A549 (cell line): ENCODE measurements at regions of chr9 and their contacts with region 1.

Region 1: DNA sequence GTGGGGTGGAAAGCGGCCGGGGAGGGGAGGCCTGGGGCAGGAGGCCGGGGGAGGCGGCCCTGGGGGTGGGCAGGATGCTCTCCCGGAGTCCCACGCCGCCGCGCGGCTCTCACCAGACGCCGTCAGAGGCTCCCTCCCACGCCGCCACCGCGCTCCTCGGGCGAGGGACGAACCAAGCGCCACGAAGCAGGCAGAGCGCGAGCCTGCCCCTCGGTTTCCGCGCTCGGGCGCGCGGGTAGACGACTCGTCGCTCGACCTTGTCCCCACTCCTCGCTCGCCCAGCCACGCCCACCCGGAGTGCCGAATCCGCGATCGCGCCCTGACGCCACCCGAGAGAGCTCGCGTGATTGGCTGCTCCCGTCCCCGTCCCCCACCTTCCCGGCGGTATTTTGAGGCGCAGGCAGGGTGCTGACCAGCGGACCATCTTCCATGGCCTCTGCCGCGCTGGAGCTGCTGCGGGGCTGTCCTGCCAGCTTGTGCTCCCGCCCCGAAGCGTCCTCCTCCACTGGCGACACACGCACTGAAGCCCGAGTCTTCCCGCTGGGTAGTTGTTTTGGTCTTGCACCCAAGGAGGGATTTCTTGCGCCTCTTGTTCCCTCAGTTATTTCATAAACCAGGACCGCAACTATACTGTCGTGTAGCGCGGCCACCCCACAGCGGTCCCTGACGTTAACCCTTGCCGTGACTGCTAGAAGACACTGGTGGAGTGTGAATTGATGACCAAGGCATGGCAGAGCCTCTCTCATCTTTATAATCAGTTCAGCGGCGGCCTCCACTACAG is at the start of gene GNE:
- DNase-seq: peak; percentile 83 to 96
- ATAC-seq: peak; percentile 92 to 93
- H3K4me3 ChIP-seq: peak within 1 kb of the TSS; percentile 89
- H3K27ac ChIP-seq: peak within 1 kb of the TSS; percentile 97
- H3K4me1 ChIP-seq: peaks cover 6% of the 10 kb centered on the region
- CTCF ChIP-seq: no peak
- EP300 ChIP-seq: no peak
- POLR2A ChIP-seq: peak; percentile 92
- RAD21 ChIP-seq: peak in 1 of 2 experiments; percentile 12; a peak in 1 of 5 replicates
- polyA plus RNA-seq, gene GNE: 32.9 and 39.5 TPM in 2 replicates

Region 2: DNA sequence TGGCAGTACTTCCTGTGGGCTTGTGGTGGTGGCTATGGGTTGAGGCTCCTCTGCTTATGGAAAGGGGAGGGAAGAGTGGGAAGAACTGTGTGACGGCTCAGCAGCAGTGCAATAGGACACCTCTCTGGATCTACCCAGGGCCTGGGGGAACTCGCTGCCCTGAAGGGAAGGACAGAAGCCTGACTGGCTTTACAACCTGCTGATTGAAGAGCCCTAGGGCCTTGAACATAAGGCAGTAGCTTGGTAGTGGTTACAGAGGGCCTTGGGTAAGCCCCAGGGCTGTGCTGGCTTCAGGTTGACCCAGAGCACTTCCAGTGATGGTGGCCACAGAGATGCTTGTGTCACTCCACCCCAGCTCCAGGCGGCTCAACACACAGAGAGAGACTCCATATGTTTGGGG is 83.7 kb before region 1 on chr9:
- CTCF ChIA-PET with region 1: no interaction called
- POLR2A ChIA-PET with region 1: no interaction called
- DNase-seq: no peak
- ATAC-seq: no peak; a peak in 1 of 6 replicates
- H3K4me3 ChIP-seq: no peak overlapping the region
- H3K27ac ChIP-seq: no peak overlapping the region
- H3K4me1 ChIP-seq: no peaks in the 10 kb centered on the region
- CTCF ChIP-seq: no peak
- EP300 ChIP-seq: no peak
- POLR2A ChIP-seq: no peak
- RAD21 ChIP-seq: no peak

Region 3: GRCh38 chr9:36306471-36307306 is 48.3 kb after region 1 on chr9:
- CTCF ChIA-PET with region 1: interaction called, 8 read pairs
- POLR2A ChIA-PET with region 1: interaction called, 10 read pairs
- DNase-seq: peak; percentile 55 to 76
- ATAC-seq: peak; percentile 84 to 85
- H3K4me3 ChIP-seq: no peak overlapping the region
- H3K27ac ChIP-seq: peak overlapping the region; percentile 67 to 84
- H3K4me1 ChIP-seq: peaks cover 27% of the 10 kb centered on the region
- CTCF ChIP-seq: no peak
- EP300 ChIP-seq: peak in 1 of 2 experiments; percentile 34; a peak in 3 of 5 replicates
- POLR2A ChIP-seq: no peak
- RAD21 ChIP-seq: no peak

Region 4: DNA sequence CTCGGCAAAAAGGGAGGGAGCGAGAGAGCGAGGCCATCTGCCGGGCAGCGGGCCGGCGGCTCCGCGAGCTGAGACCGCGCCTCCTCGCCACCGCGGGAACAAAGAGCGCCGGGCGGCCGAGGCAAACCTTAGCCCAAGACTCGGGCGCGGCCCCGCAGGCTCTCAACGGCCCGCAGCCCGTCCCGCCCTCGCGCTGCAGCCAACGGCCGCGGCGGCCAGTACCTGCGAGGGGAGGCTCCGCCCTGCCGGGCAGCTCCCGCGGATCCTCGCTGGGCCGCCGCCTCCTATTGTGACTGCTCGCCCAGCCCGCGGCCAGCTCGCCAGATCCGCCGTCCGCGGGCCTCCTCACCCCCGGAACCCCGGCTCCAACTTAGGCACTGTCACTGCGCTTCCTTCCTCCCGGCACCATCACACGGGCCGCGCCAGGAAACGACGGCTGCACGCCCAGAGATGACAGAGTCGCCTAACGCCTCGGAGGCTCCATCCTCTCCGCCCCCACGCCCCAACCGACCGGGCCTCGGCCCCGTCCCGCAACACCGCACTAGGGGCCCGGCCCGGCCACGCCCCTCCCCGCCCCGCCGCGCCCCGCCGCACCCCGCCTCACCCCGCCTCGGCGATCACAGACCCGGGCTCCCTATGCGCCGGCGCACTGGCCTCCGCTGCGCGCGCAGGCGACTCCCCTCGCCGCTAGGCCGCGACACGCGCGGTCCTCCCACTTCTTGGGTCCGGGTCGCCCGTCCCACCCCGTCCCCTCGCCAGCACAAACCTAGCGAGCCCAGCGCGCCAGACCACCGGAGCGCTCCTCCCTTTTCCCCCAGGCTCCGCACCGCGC is 142.2 kb after region 1 on chr9:
- CTCF ChIA-PET with region 1: no interaction called
- POLR2A ChIA-PET with region 1: interaction called, 16 read pairs
- DNase-seq: peak; percentile 85 to 92
- ATAC-seq: peak; percentile 92 to 93
- H3K4me3 ChIP-seq: peak overlapping the region; percentile 75
- H3K27ac ChIP-seq: peak overlapping the region; percentile 87 to 95
- H3K4me1 ChIP-seq: peaks cover 43% of the 10 kb centered on the region
- CTCF ChIP-seq: no peak; the same call in 2 of the 3 replicates
- EP300 ChIP-seq: no peak
- POLR2A ChIP-seq: peak; percentile 69
- RAD21 ChIP-seq: no peak; a peak in 1 of 5 replicates